WTC11 (cell line): ENCODE measurements at regions of chr9 and their contacts with region 1.

Region 1: DNA sequence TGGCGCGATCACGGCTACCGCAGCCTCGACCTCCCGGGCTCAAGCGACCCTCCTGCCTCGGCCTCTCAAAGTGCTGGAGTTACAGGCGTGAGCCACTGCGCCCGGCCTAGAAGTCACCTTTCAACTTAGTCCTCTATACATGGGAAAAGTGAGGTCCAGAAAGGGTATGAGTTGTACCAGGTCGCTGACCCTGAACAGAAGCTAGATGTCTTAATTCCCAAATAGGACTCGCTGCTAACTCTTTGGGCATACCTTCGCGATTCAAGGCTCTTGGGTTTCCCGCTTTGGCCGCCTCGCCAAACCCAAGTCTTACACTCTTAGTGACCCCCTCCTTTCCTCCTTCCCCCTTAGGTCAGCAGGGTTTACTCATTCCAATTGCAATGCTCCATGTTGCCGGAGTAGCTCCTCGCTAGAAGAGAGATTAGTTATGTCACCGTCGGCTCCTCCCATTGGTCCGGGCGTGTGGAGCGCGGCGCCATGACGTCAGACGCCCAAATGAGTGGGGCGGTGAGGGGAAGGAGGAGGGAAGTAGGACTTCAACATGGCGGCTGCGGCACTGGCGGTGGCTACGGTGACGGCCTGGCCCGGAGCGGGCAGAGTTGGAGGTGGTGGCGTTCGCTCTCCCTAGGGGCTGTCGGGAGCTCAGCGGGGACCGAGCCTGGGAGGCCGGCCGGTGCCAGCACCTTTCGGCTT is at the start of gene UBAP1:
- DNase-seq: peak; percentile 97
- ATAC-seq: peak; percentile 89
- H3K4me3 Mint-ChIP-seq: peak within 1 kb of the TSS; percentile 91
- H3K27ac Mint-ChIP-seq: peak within 1 kb of the TSS; percentile 96
- H3K4me1 Mint-ChIP-seq: 0 out of 2 replicates have a peak, but pooled peaks cover 5% of the 10 kb centered on the region
- H3K27me3 Mint-ChIP-seq: no peaks in the 10 kb centered on the region
- CTCF ChIP-seq: no peak
- total RNA-seq, gene UBAP1: 23.9 to 26.3 TPM (median 25.7 TPM) in 3 replicates

Region 2: DNA sequence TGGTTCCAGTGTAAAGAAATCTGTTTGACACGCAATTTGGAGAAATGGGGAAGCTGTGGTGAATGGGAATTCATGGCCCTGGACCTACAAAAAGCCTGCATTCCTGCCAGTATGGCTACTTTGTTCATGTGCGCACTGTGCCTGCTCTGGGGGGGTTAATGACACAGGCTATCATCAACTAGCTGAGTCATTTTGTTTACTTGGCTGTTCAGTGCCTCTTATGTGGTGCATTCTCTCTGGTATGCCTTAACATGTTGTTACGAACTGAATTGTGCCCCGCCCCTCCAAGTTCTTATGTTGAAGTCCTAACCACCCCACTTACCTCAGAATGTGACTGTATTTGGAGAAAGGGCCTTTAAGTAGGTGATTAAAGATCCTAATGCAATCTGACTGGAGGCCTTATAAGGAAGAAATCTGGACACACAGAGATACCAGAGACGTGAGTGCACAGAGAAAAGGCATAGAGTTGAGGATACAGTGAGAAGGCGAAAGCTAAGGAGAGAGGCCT is 20.2 kb before region 1 on chr9:
- CTCF ChIA-PET with region 1: interaction called, 15 read pairs
- POLR2A ChIA-PET with region 1: no interaction called
- DNase-seq: no peak
- ATAC-seq: no peak
- H3K4me3 Mint-ChIP-seq: no peak overlapping the region
- H3K27ac Mint-ChIP-seq: no peak overlapping the region
- H3K4me1 Mint-ChIP-seq: peaks cover 8% of the 10 kb centered on the region
- H3K27me3 Mint-ChIP-seq: no peaks in the 10 kb centered on the region
- CTCF ChIP-seq: no peak

Region 3: GRCh38 chr9:34206561-34206960 is 27.9 kb after region 1 on chr9:
- CTCF ChIA-PET with region 1: no interaction called
- POLR2A ChIA-PET with region 1: interaction called, 18 read pairs
- DNase-seq: no peak
- ATAC-seq: no peak
- H3K4me3 Mint-ChIP-seq: no peak overlapping the region
- H3K27ac Mint-ChIP-seq: no peak overlapping the region
- H3K4me1 Mint-ChIP-seq: no peaks in the 10 kb centered on the region; the same call in 1 of the 2 replicates
- H3K27me3 Mint-ChIP-seq: no peaks in the 10 kb centered on the region
- CTCF ChIP-seq: no peak

Region 4: GRCh38 chr9:34246453-34246852 is 67.8 kb after region 1 on chr9:
- CTCF ChIA-PET with region 1: no interaction called
- POLR2A ChIA-PET with region 1: no interaction called
- DNase-seq: no peak
- ATAC-seq: no peak
- H3K4me3 Mint-ChIP-seq: no peak overlapping the region
- H3K27ac Mint-ChIP-seq: no peak overlapping the region
- H3K4me1 Mint-ChIP-seq: no peaks in the 10 kb centered on the region
- H3K27me3 Mint-ChIP-seq: no peaks in the 10 kb centered on the region
- CTCF ChIP-seq: no peak